Activated naive CD8-positive, alpha-beta T cell treated with anti-CD3 and anti-CD28 coated beads, Interleukin-2, amount 10 ng/mL, durations not matched to agents 7 days and 5 days (primary cell): ENCODE measurements at regions of chr19 and their contacts with region 1.

Region 1: GRCh38 chr19:20776083-20777076 is at the start of gene ZNF66:
- DNase-seq: peak; percentile 87
- ATAC-seq: peak; percentile 97
- H3K4me3 Mint-ChIP-seq: peak within 1 kb of the TSS; percentile 97
- H3K27ac Mint-ChIP-seq: peak within 1 kb of the TSS; percentile 98
- H3K4me1 Mint-ChIP-seq: peaks cover 5% of the 10 kb centered on the region
- H3K27me3 Mint-ChIP-seq: no peaks in the 10 kb centered on the region
- total RNA-seq, gene ZNF66: 15.4 to 16.7 TPM

Region 2: GRCh38 chr19:20565321-20566018 is 210.9 kb before region 1 on chr19 and contains the start of gene ZNF737:
- POLR2A ChIA-PET with region 1: interaction called, 28 read pairs
- DNase-seq: peak; percentile 86
- ATAC-seq: peak; percentile 97
- H3K4me3 Mint-ChIP-seq: peak within 1 kb of the TSS; percentile 98
- H3K27ac Mint-ChIP-seq: peak within 1 kb of the TSS; percentile 98
- H3K4me1 Mint-ChIP-seq: peaks cover 6% of the 10 kb centered on the region
- H3K27me3 Mint-ChIP-seq: no peaks in the 10 kb centered on the region
- total RNA-seq, gene ZNF737: 30.9 to 33.8 TPM

Region 3: DNA sequence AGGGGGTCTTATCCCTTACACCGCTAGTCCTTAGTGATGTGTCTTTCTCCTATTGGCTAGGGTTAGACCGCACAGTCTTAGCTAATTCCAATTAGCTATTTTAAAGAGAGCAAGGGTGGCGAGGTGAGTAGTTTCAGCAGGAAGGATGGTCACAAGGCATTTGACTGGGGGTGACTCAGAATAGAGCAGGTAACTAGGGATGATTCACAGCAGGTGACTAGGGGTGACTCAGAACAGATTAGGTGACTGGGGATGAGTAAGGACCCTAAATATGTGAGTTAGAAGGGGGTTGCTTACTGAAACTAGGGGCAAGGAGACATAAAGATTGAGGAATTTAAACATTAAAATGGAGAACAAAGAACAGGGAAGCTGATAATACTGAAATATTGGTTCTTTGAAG is 64.0 kb after region 1 on chr19:
- POLR2A ChIA-PET with region 1: no interaction called
- DNase-seq: no peak
- ATAC-seq: no peak
- H3K4me3 Mint-ChIP-seq: no peak overlapping the region
- H3K27ac Mint-ChIP-seq: no peak overlapping the region
- H3K4me1 Mint-ChIP-seq: no peaks in the 10 kb centered on the region
- H3K27me3 Mint-ChIP-seq: no peaks in the 10 kb centered on the region

Region 4: DNA sequence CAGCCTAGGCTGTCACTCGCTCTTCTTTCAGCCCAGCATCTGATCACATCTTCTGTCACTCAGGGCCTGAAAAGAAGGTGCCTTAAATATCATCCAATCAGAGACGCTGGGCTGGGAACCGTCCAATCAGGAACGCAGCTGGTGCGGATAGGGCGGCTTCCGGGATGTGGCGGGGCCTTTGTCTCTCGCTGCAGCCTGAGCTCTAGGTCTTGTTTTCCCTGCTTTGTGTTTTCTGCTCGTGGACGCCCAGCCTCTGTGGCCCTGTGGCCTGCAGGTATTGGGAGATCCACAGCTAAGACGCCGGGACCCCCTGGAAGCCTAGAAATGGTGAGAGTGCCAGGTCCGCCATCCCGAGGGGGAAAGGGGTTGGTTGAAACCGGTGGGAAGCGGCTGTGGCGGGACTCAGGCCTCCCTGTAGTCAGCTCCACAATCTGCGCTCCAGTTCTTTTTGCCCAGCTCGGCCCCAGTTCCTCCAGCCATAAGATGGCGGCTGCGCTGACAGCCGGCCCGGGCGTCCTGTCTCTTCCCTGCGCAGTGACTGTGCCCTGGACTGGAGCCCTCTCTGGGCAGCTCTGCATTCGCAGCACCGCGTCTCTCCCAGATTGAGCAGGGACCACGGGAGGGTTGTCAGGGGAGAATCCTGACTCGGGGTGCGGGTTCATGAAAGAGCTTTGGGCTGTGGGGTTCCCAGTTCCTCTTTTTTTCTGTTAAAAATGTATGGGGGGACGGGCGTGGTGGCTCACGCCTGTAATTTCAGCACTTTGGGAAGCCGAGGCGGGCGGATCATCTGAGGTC is 146.9 kb after region 1 on chr19 and contains the start of gene ZNF85:
- POLR2A ChIA-PET with region 1: interaction called, 29 read pairs
- DNase-seq: peak; percentile 85
- ATAC-seq: peak; percentile 99
- H3K4me3 Mint-ChIP-seq: peak within 1 kb of the TSS; percentile 97
- H3K27ac Mint-ChIP-seq: peak within 1 kb of the TSS; percentile 99
- H3K4me1 Mint-ChIP-seq: peaks cover 13% of the 10 kb centered on the region
- H3K27me3 Mint-ChIP-seq: no peaks in the 10 kb centered on the region
- total RNA-seq, gene ZNF85: 22.7 to 25.0 TPM

Region 5: DNA sequence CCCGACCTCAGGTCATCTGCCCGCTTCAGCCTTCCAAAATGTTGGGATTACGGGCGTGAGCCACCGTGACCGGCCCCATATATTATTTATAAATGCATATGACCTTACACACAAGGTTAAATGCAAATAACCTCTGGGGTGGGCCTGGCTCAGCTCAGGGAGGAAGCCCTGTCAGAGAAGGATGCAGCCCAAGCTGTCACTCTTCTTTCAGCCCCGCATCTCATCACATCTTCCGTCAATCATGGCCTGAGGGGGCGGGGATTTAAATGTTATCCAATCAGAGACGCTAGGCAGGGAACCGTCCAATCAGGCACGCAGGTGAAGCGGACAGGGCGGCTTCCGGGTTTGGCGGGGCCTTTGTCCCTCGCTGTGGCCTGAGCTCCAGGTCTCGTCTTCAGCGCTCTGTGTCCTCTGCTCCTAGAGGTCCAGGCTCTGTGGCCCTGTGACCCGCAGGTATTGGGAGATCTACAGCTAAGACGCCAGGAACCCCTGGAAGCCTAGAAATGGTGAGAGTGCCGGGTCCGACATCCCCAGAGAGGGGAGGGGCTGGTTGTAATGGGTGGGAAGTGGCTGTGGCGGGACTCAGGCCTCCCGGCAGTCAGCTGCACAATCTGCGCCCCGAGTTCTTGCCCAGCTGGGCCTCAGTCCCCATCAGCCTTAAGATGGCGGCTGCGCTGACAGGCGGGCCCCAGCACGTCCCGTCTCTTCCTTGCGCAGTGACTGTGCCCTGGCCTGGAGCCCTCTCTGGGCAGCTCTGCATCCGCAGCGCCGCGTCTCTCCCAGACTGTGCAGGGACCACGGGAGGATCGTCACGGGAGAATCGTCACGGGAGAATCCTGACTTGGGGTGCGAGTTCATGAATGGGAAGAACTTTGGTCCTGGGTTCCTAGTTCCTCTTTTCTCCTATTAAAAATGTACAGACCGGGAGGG is 244.2 kb after region 1 on chr19 and contains the start of gene ZNF430:
- POLR2A ChIA-PET with region 1: interaction called, 12 read pairs
- DNase-seq: peak; percentile 83
- ATAC-seq: peak; percentile 97
- H3K4me3 Mint-ChIP-seq: peak within 1 kb of the TSS; percentile 99
- H3K27ac Mint-ChIP-seq: peak within 1 kb of the TSS; percentile 100
- H3K4me1 Mint-ChIP-seq: peaks cover 24% of the 10 kb centered on the region
- H3K27me3 Mint-ChIP-seq: no peaks in the 10 kb centered on the region
- total RNA-seq, gene ZNF430: 33.9 to 35.0 TPM